Psoas muscle (tissue), 8 donors: ENCODE measurements at regions of chr3 and their contacts with region 1.

Region 1: GRCh38 chr3:15108082-15108545 is 9.2 kb upstream of the RBSN start:
- DNase-seq: peak; percentile 75 to 89
- ATAC-seq: peak; percentile 83 to 93 (median 87)
- H3K4me3 ChIP-seq: no peak overlapping the region
- H3K27ac ChIP-seq: no peak overlapping the region
- H3K4me1 ChIP-seq: peaks cover 8% of the 10 kb centered on the region
- H3K27me3 ChIP-seq: no peaks in the 10 kb centered on the region
- CTCF ChIP-seq: peak; percentile 94

Region 2: DNA sequence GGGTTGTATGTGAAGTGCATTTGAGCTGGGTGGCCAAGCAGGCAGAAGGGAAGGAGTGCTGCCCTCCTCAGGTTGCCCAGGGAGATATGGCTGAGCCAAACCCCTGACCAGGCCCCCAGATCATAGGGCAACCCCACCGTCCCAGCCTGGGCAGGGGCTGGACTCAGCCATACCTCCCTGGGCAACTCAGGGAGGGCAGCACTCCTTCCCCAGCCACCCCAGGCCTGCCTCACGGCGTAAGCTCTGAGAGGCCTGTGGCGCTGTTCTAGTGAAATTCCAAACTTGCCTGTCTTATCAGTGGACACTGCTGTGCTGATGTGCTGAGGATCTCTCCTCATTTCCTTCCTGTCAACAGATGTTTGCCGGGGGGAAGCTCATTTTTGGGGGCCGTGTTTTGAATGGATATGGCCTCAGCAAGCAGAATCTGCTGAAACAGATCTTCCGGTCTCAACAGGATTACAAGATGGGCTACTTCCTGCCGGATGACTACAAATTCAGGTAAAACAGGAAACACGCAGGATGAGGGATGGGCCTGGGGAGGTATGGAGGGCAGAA is 346.9 kb before region 1 on chr3:
- intact Hi-C with region 1: no loop called
- DNase-seq: no peak
- ATAC-seq: no peak
- H3K4me3 ChIP-seq: no peak overlapping the region
- H3K27ac ChIP-seq: no peak overlapping the region
- H3K4me1 ChIP-seq: no peaks in the 10 kb centered on the region
- H3K27me3 ChIP-seq: no peaks in the 10 kb centered on the region
- CTCF ChIP-seq: no peak

Region 3: GRCh38 chr3:14902719-14903118 is 205.4 kb before region 1 on chr3:
- intact Hi-C with region 1: no loop called
- DNase-seq: peak; percentile 66 to 82
- ATAC-seq: peak; percentile 53 to 77 (median 67)
- H3K4me3 ChIP-seq: no peak overlapping the region
- H3K27ac ChIP-seq: no peak overlapping the region
- H3K4me1 ChIP-seq: no peaks in the 10 kb centered on the region
- H3K27me3 ChIP-seq: no peaks in the 10 kb centered on the region
- CTCF ChIP-seq: no peak

Region 4: DNA sequence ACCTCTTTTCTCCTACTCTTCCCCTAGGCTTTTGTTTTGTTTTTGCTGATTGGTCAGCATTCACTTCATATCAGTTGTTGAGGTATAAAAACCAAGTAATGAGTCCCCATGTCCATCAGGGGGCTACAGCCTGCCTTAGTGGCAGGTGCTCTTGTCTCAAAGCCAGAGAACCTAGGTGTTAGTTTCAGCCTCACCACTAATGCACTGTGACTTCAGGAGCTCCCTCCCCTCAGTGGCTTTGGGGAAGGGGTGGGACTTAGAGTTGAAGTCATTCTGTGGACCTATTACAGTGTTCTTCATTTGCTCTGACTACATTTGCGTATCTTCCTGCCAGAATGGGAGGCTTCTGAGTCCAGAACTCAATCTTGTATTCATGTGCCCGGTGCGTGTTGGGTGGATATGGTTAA is 119.1 kb before region 1 on chr3:
- intact Hi-C with region 1: no loop called
- DNase-seq: no peak
- ATAC-seq: peak in 1 of 4 donors; percentile 39
- H3K4me3 ChIP-seq: no peak overlapping the region
- H3K27ac ChIP-seq: no peak overlapping the region
- H3K4me1 ChIP-seq: peaks cover 54% of the 10 kb centered on the region
- H3K27me3 ChIP-seq: no peaks in the 10 kb centered on the region
- CTCF ChIP-seq: no peak

Region 5: GRCh38 chr3:15384510-15385237 is 276.6 kb after region 1 on chr3:
- intact Hi-C with region 1: loop called (anchors 5 to 10 kb)
- DNase-seq: no peak
- ATAC-seq: no peak
- H3K4me3 ChIP-seq: no peak overlapping the region
- H3K27ac ChIP-seq: no peak overlapping the region
- H3K4me1 ChIP-seq: no peaks in the 10 kb centered on the region
- H3K27me3 ChIP-seq: no peaks in the 10 kb centered on the region
- CTCF ChIP-seq: no peak

Region 6: GRCh38 chr3:15405448-15406050 is 297.4 kb after region 1 on chr3:
- intact Hi-C with region 1: loop called in 1 of 2 experiments (anchors 10 kb)
- DNase-seq: no peak
- ATAC-seq: peak in 3 of 4 donors; percentile 40 to 74 (median 55)
- H3K4me3 ChIP-seq: no peak overlapping the region
- H3K27ac ChIP-seq: no peak overlapping the region
- H3K4me1 ChIP-seq: no peaks in the 10 kb centered on the region
- H3K27me3 ChIP-seq: no peaks in the 10 kb centered on the region
- CTCF ChIP-seq: peak; percentile 65

Region 7: GRCh38 chr3:15562560-15562959 is 454.4 kb after region 1 on chr3:
- intact Hi-C with region 1: loop called in 1 of 2 experiments (anchors 10 kb)
- DNase-seq: no peak
- ATAC-seq: no peak
- H3K4me3 ChIP-seq: no peak overlapping the region
- H3K27ac ChIP-seq: no peak overlapping the region
- H3K4me1 ChIP-seq: no peaks in the 10 kb centered on the region
- H3K27me3 ChIP-seq: no peaks in the 10 kb centered on the region
- CTCF ChIP-seq: no peak